Prostate gland (tissue), 2 donors: ENCODE measurements at regions of chr16 and their contacts with region 1.

Region 1: DNA sequence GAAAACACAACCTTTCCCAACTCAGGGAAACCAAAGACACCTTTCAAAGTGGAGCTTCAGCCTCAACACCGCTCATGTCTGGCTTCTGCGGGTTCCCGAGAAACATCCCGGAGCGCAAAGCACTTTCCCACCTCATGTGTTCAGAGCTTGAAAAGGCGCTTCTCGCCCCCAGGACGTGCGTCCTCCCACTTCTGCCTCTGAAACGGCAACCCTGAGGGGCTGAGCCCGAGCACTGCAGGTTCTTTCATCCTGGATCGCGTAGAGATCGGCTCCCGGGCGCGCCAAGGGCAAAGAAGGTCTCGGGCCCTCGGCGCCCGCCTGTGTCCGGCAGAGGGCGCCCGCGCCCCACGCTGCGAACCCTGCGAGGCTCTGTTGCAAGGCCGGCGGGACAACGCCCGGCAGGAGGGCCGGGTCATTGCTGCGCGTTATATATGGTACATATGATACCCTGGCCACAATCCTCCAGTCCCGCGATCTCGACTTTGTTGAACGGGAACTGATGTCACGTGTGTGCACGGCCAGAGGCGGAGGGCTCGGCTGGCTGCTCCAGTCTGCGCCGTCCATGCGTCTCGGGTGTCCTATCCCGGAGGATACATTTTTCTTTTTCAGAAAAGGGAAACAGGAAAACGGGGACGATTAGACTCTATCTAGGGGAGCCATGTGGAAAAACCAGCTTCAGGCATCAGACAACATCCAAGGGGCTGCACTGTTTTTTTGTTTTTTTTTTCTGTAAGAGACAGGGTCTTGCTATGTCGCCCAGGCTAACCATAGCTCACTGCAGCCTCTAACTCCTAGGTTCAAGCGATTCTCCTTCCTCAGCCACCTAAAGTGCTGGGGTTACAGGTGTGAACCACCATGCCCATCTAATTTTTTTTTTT is 19.1 kb downstream of the COQ7 start:
- DNase-seq: peak; percentile 81
- H3K4me3 ChIP-seq: peak overlapping the region; percentile 27 to 28
- H3K27ac ChIP-seq: peak overlapping the region; percentile 8 to 39
- H3K4me1 ChIP-seq: no peaks in the 10 kb centered on the region
- H3K27me3 ChIP-seq: no peaks in the 10 kb centered on the region
- CTCF ChIP-seq: peak; percentile 98 to 99 (median 99)
- POLR2A ChIP-seq: no peak

Region 2: GRCh38 chr16:19130852-19131810 is 44.6 kb after region 1 on chr16:
- intact Hi-C with region 1: loop called (anchors 10 kb)
- DNase-seq: peak; percentile 31
- H3K4me3 ChIP-seq: no peak overlapping the region
- H3K27ac ChIP-seq: peak overlapping the region; percentile 23 to 69
- H3K4me1 ChIP-seq: peaks cover 12% of the 10 kb centered on the region
- H3K27me3 ChIP-seq: no peaks in the 10 kb centered on the region
- CTCF ChIP-seq: no peak
- POLR2A ChIP-seq: no peak

Region 3: DNA sequence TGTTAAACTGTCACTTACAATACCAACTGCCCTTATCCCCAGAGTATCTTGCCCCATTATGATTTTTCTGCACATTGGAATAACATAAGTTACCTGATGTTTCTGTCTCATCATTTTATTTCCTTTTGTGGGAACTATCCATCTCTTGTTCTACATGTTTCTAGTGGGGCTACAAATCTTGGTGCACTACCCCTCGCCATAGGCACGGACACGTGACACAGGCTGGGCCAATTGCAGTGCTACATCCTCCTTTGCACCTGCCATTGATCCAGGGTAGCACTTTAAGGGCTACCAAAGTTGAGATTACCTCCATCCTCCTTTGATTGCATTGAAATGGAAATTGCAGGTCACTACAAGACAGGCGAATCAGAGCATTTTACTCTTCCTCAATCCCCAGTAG is 67.3 kb after region 1 on chr16:
- intact Hi-C with region 1: no loop called
- DNase-seq: no peak
- H3K4me3 ChIP-seq: no peak overlapping the region
- H3K27ac ChIP-seq: no peak overlapping the region
- H3K4me1 ChIP-seq: no peaks in the 10 kb centered on the region
- H3K27me3 ChIP-seq: no peaks in the 10 kb centered on the region
- CTCF ChIP-seq: no peak
- POLR2A ChIP-seq: no peak

Region 4: DNA sequence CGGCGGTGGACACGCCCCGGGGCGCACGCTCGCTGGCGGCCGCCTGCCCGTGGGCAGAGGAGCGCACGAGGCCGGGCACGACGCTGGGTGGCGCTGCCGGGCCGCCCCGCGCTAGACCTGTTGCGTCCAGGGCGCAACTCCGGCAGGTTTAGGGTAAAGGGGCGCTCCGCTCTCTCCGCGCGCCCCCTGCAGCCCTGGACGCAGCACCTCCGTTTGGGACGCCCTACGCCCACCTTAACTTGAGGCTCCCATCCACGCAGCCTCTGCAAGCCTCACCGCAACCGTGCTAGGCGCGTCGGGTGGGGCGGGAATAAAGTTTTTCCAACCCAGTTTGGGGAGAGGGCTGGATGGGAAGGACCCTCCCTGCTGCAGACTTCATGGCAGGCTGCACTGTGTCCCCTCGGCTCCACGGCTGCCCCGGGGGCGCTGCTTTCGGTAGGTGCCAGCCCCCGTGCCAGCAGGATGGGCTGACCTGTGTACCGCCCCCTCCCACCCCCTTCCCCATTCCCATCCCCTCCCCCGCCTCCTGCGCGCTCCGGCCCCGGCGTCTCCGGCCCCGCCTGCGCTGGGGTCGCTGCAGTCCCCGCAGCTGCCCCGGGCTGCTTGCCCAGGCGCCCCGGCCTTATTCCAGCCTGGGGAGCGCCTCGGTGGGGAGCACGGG is 81.3 kb after region 1 on chr16 and contains the start of gene SYT17:
- intact Hi-C with region 1: loop called (anchors 2 kb)
- DNase-seq: peak; percentile 71
- H3K4me3 ChIP-seq: peak within 1 kb of the TSS; percentile 64 to 76
- H3K27ac ChIP-seq: peak within 1 kb of the TSS; percentile 75 to 87
- H3K4me1 ChIP-seq: peaks cover 4% of the 10 kb centered on the region
- H3K27me3 ChIP-seq: no peaks in the 10 kb centered on the region
- CTCF ChIP-seq: peak; percentile 83 to 97 (median 93)
- POLR2A ChIP-seq: peak; percentile 25
- total RNA-seq, gene SYT17: 24.3 to 32.4 TPM

Region 5: GRCh38 chr16:19375561-19376158 is 289.1 kb after region 1 on chr16:
- intact Hi-C with region 1: loop called (anchors 2 kb)
- DNase-seq: peak; percentile 25
- H3K4me3 ChIP-seq: no peak overlapping the region
- H3K27ac ChIP-seq: no peak overlapping the region
- H3K4me1 ChIP-seq: no peaks in the 10 kb centered on the region
- H3K27me3 ChIP-seq: no peaks in the 10 kb centered on the region
- CTCF ChIP-seq: peak; percentile 78 to 94 (median 89)
- POLR2A ChIP-seq: no peak

Region 6: GRCh38 chr16:19502395-19503131 is 416.0 kb after region 1 on chr16:
- intact Hi-C with region 1: loop called (anchors 5 kb)
- DNase-seq: peak; percentile 76
- H3K4me3 ChIP-seq: no peak overlapping the region
- H3K27ac ChIP-seq: no peak overlapping the region
- H3K4me1 ChIP-seq: peaks cover 7% of the 10 kb centered on the region
- H3K27me3 ChIP-seq: no peaks in the 10 kb centered on the region
- CTCF ChIP-seq: peak; percentile 56 to 87 (median 72)
- POLR2A ChIP-seq: no peak